Aorta (tissue), 5 donors: ENCODE measurements at regions of chr10 and their contacts with region 1.

Region 1: GRCh38 chr10:87861953-87862678 is 1.2 kb downstream of the KLLN start:
- DNase-seq: peak; percentile 98
- ATAC-seq: peak; percentile 95
- H3K4me3 ChIP-seq: peak overlapping the region; percentile 94 to 99
- H3K27ac ChIP-seq: peak overlapping the region; percentile 8 to 91
- H3K4me1 ChIP-seq: no peaks in the 10 kb centered on the region
- H3K27me3 ChIP-seq: no peaks in the 10 kb centered on the region

Region 2: DNA sequence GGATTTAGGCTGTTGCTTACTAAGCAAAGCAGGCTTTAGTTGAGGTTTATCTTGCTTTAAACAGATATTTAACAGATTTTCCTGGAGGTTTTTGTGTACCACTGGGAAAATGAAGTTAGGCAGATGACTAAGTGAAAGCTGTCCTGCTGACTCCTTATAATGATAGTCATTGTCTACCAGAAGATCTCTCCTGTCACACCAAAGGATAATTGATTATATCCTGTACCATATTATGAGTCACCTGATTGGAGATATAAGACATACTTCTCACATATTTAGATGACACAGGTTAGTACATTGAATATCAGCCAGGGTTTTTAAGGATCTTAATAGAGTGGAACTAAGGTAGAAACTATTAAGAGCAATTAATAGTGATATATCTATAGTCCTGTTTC is 69.7 kb after region 1 on chr10:
- intact Hi-C with region 1: loop called (anchors 10 kb)
- DNase-seq: no peak
- ATAC-seq: no peak
- H3K4me3 ChIP-seq: no peak overlapping the region
- H3K27ac ChIP-seq: no peak overlapping the region
- H3K4me1 ChIP-seq: peaks cover 2 to 8% of the 10 kb centered on the region in 2 donors
- H3K27me3 ChIP-seq: no peaks in the 10 kb centered on the region

Region 3: DNA sequence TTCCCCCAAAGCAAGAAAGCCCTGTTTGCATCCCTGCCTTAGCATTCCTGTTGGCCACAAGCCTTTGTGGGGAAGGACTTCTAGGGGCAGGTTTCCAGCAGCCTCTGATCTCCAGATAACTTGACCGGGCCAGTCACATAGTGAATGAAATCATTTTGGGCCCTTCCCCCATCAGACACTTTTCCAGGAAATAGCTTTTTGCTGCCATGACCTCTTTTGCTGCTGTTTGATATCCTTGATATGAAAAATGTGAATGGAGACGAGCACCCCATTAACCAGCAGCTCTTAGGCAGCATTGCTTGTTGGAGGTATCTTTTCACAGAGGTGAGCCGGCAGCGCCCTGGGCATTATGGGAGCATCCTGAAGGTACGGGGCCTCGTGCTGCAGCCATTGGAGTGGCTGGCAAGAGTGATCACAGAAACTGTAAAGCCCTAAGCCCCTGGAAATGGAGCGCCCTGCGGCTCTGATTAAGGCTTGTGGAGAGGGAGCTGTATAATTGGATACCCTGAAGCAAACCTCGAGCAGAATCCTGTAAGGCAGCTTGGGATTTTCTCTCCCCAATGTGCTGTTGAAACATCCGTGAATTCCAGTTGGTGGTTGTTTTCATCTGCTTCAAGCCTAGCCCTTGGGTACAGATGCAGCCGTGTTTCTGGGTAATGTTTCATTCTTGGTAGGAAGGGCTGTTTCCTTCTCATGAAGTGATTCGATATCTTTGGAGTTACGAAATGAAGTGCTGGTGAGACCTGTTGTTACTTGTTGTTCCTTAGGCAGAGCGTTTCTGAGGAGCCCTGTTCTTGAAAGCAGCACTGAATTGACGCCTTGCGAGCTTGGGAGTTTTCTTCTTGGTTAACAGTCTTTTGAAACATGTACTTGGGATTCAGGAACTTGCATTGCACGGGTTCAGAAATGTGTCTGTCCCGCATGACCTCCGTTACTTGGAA is 180.3 kb after region 1 on chr10:
- intact Hi-C with region 1: loop called in 1 of 2 experiments (anchors 2 kb)
- DNase-seq: peak in 1 of 2 donors; percentile 69
- ATAC-seq: peak; percentile 63
- H3K4me3 ChIP-seq: no peak overlapping the region
- H3K27ac ChIP-seq: peak overlapping the region; percentile 82 to 97
- H3K4me1 ChIP-seq: peaks cover 11 to 16% of the 10 kb centered on the region in 2 donors
- H3K27me3 ChIP-seq: no peaks in the 10 kb centered on the region

Region 4: DNA sequence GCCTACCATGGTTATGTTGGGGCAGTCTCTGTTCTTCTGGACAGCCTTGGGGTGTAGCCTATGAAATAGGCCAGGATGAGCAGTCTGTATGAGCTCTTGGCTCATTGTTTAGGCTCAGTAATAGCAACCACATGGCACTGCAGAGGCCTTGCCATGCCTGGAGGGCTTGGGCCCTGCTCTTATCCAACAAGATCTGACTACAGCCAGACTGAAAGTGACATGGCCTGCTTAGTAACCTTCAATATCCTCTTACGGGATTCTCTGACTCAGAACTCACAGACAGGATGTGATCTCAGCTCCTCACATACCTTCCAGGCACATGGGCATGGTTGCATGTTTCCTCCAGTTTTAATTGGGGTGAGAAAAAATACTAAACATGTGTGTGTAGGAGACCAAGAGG is 290.6 kb after region 1 on chr10:
- intact Hi-C with region 1: loop called in 1 of 2 experiments (anchors 5 kb)
- DNase-seq: peak in 1 of 2 donors; percentile 64
- ATAC-seq: peak; percentile 48
- H3K4me3 ChIP-seq: no peak overlapping the region
- H3K27ac ChIP-seq: no peak overlapping the region
- H3K4me1 ChIP-seq: peaks cover 3 to 4% of the 10 kb centered on the region in 2 donors
- H3K27me3 ChIP-seq: no peaks in the 10 kb centered on the region

Region 5: DNA sequence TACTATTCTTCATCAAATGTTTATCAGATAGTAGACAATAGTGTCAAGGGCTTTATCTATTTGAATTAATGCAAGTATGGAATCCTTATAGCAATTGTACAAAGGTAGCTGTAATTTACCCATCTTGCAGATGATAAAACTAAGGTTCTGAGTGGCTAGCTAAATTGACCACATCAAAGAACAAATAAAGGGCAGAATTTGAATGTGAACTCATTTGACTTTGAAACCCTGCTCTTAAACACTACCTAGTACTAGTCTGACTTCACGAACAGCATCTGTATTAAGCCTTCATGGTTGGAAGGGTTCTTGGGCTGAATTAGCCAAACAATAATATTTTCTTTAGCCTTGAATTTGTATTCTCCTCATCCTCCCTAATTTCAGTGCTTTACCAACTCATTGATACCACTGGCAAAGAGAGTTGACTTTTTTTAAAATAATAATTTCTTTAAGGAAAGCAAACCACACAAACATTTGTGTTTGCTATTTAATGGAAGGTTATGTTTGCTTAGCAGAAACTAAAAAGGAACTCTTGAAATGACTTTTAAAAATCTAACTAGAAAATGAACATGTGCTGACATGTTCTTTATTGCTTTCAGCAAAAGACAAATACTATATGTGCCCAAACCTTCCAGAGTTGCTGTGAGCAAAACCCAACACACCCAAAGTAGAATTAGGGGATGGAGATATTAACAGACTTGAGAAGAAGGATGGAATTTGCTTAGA is 398.4 kb after region 1 on chr10:
- intact Hi-C with region 1: loop called in 1 of 2 experiments (anchors 10 kb)
- DNase-seq: no peak
- ATAC-seq: no peak
- H3K4me3 ChIP-seq: no peak overlapping the region
- H3K27ac ChIP-seq: no peak overlapping the region
- H3K4me1 ChIP-seq: no peaks in the 10 kb centered on the region
- H3K27me3 ChIP-seq: no peaks in the 10 kb centered on the region